G401 (cell line): ENCODE measurements at regions of chr11 and their contacts with region 1.

Region 1: GRCh38 chr11:68164437-68164836 is 43.2 kb upstream of the CHKA start:
- DNase-seq: no peak

Region 2: GRCh38 chr11:68081691-68082090 is 82.7 kb before region 1 on chr11:
- in situ Hi-C with region 1: loop called (anchors 5 kb)
- DNase-seq: no peak

Region 3: DNA sequence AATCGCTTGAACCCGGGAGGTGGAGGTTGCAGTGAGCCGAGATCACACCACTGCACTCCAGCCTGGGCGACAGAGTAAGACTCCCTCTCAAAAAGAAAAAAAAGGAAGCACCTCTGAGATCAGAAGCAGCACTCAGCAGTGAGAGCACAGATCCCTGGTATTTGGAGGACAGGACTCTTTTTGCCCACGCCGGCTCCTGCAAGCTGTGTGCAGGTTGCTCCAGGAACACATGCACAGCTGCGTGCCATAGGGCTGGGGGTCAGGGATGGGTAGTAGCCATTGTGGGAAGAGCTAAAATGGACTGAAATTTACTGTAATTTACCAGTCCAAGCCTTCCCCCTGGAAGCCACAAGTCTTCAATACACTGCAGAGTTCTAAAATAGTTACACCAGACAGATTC is 71.2 kb after region 1 on chr11:
- in situ Hi-C with region 1: no loop called
- DNase-seq: no peak